Mammary epithelial cell (primary cell): ENCODE measurements at regions of chr7 and their contacts with region 1.

Region 1: DNA sequence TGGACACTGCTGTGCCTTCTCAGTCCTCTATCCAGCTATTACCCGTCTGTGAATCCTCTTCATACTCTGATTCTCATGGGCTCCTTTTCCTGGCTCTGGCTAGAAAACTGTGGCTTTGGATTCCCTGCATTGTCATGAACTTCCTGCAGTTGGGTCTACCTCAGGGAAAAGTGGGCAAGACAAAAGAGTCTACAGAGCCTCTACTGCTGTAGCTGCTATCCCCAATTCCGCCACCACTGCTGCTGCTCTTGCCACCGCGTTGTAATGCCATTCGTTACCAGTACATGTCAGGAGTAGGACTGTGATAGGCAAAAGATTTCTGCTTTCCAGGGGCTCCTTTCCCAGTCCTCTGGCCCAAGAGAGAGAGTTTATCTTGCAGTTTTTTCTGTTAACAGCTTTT is 23.9 kb upstream of the PPP1R17 start:
- DNase-seq: no peak
- H3K4me3 ChIP-seq: no peak overlapping the region
- H3K27ac ChIP-seq: no peak overlapping the region
- H3K4me1 ChIP-seq: no peaks in the 10 kb centered on the region
- H3K27me3 ChIP-seq: no peaks in the 10 kb centered on the region
- CTCF ChIP-seq: peak in 1 of 2 donors; percentile 1

Region 2: GRCh38 chr7:31729198-31729781 is 66.2 kb after region 1 on chr7:
- CTCF ChIA-PET with region 1: no interaction called
- dilution Hi-C with region 1: loop called (anchors 5 kb)
- in situ Hi-C with region 1: no loop called
- intact Hi-C with region 1: no loop called
- DNase-seq: peak; percentile 57
- H3K4me3 ChIP-seq: no peak overlapping the region
- H3K27ac ChIP-seq: no peak overlapping the region
- H3K4me1 ChIP-seq: peaks cover 12% of the 10 kb centered on the region
- H3K27me3 ChIP-seq: no peaks in the 10 kb centered on the region
- CTCF ChIP-seq: peak in 1 of 2 donors; percentile 3